Prostate gland (tissue), 2 donors: ENCODE measurements at regions of chr1 and their contacts with region 1.

Region 1: DNA sequence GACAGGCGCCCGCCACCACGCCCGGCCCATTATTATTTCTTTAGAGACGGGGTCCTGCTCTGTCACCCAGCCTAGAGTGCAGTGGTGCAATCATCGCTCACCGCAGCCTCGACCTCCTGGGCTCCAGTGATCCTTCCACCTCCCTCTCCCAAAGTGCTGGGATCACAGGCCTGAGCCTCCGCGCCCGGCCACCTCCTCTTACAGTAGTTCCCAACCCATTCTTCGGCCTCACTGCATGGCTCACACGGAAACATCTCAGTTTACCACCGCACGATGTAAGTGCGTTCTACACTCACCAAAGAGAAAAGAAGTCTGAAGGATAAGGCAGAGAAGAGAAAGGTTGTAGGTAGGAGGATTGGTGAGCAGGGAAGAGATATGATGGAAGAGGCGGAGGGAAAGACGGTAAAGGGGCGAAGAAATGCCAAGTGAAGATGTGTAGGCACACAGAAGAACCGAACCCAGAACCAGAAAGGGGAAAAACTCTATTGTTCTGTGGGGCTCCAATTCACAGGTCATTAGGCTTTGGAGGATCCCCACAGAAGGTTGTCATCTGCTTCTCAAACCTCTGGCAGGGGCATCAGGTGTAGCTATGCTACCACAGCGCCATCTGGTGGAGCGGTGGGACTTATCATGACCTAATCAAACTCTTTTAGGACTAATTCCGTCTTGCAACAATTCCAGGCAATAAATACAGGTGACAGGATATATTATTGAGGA is 504.2 kb downstream of the SMYD3 start:
- DNase-seq: peak; percentile 89
- H3K4me3 ChIP-seq: no peak overlapping the region
- H3K27ac ChIP-seq: no peak overlapping the region
- H3K4me1 ChIP-seq: peaks cover 9% of the 10 kb centered on the region
- H3K27me3 ChIP-seq: no peaks in the 10 kb centered on the region
- CTCF ChIP-seq: peak; percentile 84 to 95 (median 86)
- POLR2A ChIP-seq: no peak

Region 2: GRCh38 chr1:245380790-245381535 is 621.9 kb before region 1 on chr1:
- intact Hi-C with region 1: loop called (anchors 5 kb)
- DNase-seq: no peak
- H3K4me3 ChIP-seq: no peak overlapping the region
- H3K27ac ChIP-seq: no peak overlapping the region
- H3K4me1 ChIP-seq: no peaks in the 10 kb centered on the region
- H3K27me3 ChIP-seq: no peaks in the 10 kb centered on the region
- CTCF ChIP-seq: peak in 1 of 4 experiments; percentile 9
- POLR2A ChIP-seq: no peak

Region 3: DNA sequence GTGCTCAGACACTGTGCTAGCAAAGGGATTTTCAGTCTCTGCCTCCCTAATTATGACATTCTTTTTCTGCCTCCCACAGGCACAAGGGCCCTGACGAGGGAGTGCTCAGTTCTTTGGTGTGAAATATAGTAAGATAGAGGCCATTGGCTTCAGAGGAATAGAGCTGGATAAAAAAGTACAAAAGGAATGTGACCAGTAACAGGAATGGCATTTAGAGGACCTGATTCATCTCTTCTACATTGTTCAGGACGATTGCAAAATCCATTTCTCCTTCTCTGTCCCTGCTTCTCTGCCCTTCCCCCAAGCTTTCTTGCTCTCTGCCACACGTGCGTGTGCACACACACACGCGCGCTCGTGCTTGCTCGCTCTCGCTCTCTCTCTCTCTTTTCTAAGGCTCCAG is 179.9 kb before region 1 on chr1:
- intact Hi-C with region 1: loop called (anchors 10 kb)
- DNase-seq: no peak
- H3K4me3 ChIP-seq: no peak overlapping the region
- H3K27ac ChIP-seq: no peak overlapping the region
- H3K4me1 ChIP-seq: no peaks in the 10 kb centered on the region
- H3K27me3 ChIP-seq: no peaks in the 10 kb centered on the region
- CTCF ChIP-seq: no peak
- POLR2A ChIP-seq: no peak

Region 4: DNA sequence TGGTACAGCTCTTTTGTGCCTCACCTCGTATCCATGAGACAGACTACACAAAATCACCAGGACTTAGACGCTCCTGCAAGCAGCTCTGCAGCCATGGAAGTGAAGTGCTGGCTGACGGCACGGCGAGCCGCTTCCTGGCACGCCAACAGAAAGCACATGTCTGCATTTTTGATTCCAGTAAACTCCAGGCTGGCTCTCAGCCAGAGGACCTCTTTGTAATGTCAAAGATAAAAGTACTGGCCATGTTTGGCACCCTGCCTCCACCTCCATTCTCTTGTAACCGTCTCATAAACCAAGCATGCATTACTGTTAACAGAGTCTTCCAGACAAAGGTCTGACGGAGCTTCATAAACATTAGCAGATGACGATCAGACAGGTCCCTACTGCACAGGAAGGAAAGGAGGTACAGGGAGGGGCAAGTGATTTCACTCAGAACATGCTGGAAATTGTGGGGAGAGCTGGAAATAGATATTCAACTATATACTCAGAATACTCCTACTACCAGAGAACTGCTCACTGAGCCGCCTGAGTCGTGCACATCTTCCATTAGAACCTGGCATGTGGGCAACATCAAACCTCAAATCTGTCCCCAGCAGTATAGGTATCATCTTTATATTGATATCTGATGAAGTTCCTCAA is 127.8 kb before region 1 on chr1:
- intact Hi-C with region 1: loop called (anchors 5 kb)
- DNase-seq: peak; percentile 84
- H3K4me3 ChIP-seq: no peak overlapping the region
- H3K27ac ChIP-seq: peak overlapping the region in 1 of 2 donors; percentile 2
- H3K4me1 ChIP-seq: no peaks in the 10 kb centered on the region
- H3K27me3 ChIP-seq: no peaks in the 10 kb centered on the region
- CTCF ChIP-seq: no peak
- POLR2A ChIP-seq: no peak

Region 5: DNA sequence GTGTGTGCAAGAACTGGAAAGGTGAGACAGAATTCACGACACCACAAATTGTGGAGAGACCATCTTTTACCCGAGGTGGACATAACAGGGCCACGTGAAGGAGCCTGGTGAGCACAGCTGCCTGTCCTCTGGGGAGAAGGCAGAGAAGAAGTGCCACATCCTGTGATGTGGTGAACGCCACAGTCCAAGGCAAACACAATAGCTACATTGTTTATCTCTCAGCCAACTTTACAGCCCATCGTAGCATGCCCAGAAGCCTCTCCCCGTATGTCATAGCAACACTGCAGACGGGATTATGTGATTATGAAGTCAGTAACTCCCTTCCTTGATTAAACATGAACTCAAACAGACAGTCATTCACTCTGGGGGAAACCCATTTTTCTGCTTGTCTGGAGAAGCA is 108.0 kb before region 1 on chr1:
- intact Hi-C with region 1: no loop called
- DNase-seq: no peak
- H3K4me3 ChIP-seq: no peak overlapping the region
- H3K27ac ChIP-seq: no peak overlapping the region
- H3K4me1 ChIP-seq: no peaks in the 10 kb centered on the region
- H3K27me3 ChIP-seq: no peaks in the 10 kb centered on the region
- CTCF ChIP-seq: no peak
- POLR2A ChIP-seq: no peak

Region 6: GRCh38 chr1:245953876-245954660 is 48.8 kb before region 1 on chr1:
- intact Hi-C with region 1: loop called (anchors 5 kb)
- DNase-seq: no peak
- H3K4me3 ChIP-seq: peak overlapping the region in 1 of 2 donors; percentile 16
- H3K27ac ChIP-seq: peak overlapping the region; percentile 39 to 58
- H3K4me1 ChIP-seq: no peaks in the 10 kb centered on the region
- H3K27me3 ChIP-seq: no peaks in the 10 kb centered on the region
- CTCF ChIP-seq: no peak
- POLR2A ChIP-seq: no peak

Region 7: DNA sequence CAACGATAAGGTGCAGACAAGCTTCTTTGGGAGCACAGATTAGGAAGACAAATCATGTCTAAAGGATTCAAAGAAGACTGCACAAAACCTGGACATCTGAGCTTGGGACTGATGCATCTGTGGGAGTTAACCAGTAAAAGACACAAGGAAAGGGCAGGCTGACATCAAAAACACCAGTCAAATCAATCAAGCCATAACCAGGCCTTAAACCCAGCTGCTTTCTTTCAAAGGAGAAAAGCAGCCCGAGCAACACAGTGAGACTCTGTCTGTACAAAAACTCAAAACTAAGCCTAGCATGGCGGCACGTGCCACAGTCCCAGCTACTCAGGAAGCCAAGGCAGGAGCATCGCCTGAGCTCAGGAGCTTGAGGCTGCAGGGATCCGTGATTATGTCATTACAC is 92.6 kb after region 1 on chr1:
- intact Hi-C with region 1: no loop called
- DNase-seq: no peak
- H3K4me3 ChIP-seq: no peak overlapping the region
- H3K27ac ChIP-seq: no peak overlapping the region
- H3K4me1 ChIP-seq: no peaks in the 10 kb centered on the region
- H3K27me3 ChIP-seq: no peaks in the 10 kb centered on the region
- CTCF ChIP-seq: no peak
- POLR2A ChIP-seq: no peak